A673 (cell line): ENCODE measurements at regions of chr9 and their contacts with region 1.

Region 1: GRCh38 chr9:137046098-137046787 is at the start of gene NPDC1:
- DNase-seq: peak; percentile 80
- H3K4me3 ChIP-seq: peak within 1 kb of the TSS; percentile 76
- H3K27ac ChIP-seq: peak within 1 kb of the TSS; percentile 27
- H3K4me1 ChIP-seq: peaks cover 24% of the 10 kb centered on the region
- H3K27me3 ChIP-seq: no peaks in the 10 kb centered on the region
- CTCF ChIP-seq: peak; percentile 88
- total RNA-seq, gene NPDC1: 73.9 and 81.4 TPM in 2 replicates

Region 2: DNA sequence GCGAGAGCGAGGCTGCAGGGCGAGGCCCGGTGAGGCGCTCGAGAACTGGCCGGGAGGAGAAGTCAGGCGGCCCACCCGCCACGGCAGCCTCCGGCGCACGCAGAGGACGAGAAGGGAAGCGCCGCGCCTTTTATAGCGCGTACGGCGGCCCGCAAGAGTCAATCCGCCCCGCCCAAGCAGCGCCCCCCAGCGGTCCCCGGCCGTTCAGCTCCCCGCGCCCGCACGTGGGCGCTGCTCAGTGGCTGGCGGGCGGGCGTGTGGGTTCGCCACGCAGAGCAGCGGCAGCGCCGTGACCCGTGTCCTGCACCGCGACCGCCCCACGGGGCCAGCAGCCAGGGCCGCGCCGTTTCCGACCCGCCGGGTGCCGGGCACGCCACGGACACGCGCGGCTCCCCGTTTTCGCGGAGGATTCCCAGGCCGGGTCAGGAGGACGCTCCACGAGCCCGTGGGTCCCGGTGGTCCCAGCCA is 318.1 kb before region 1 on chr9:
- CTCF ChIA-PET with region 1: interaction called, 10 read pairs
- POLR2A ChIA-PET with region 1: no interaction called
- intact Hi-C with region 1: no loop called
- DNase-seq: peak; percentile 92
- H3K4me3 ChIP-seq: peak overlapping the region; percentile 95
- H3K27ac ChIP-seq: peak overlapping the region; percentile 94
- H3K4me1 ChIP-seq: peaks cover 20% of the 10 kb centered on the region
- H3K27me3 ChIP-seq: no peaks in the 10 kb centered on the region
- CTCF ChIP-seq: peak; percentile 85

Region 3: GRCh38 chr9:136769710-136770191 is 276.5 kb before region 1 on chr9:
- CTCF ChIA-PET with region 1: interaction called, 11 read pairs
- POLR2A ChIA-PET with region 1: no interaction called
- intact Hi-C with region 1: no loop called
- DNase-seq: peak; percentile 73
- H3K4me3 ChIP-seq: peak overlapping the region; percentile 44
- H3K27ac ChIP-seq: no peak overlapping the region
- H3K4me1 ChIP-seq: no peaks in the 10 kb centered on the region
- H3K27me3 ChIP-seq: no peaks in the 10 kb centered on the region
- CTCF ChIP-seq: peak; percentile 65

Region 4: GRCh38 chr9:137034863-137035761 is 11.1 kb before region 1 on chr9:
- CTCF ChIA-PET with region 1: interaction called, 17 read pairs
- POLR2A ChIA-PET with region 1: no interaction called
- intact Hi-C with region 1: no loop called
- DNase-seq: peak; percentile 89
- H3K4me3 ChIP-seq: peak overlapping the region; percentile 22
- H3K27ac ChIP-seq: no peak overlapping the region
- H3K4me1 ChIP-seq: peaks cover 9% of the 10 kb centered on the region
- H3K27me3 ChIP-seq: no peaks in the 10 kb centered on the region
- CTCF ChIP-seq: peak; percentile 96

Region 5: DNA sequence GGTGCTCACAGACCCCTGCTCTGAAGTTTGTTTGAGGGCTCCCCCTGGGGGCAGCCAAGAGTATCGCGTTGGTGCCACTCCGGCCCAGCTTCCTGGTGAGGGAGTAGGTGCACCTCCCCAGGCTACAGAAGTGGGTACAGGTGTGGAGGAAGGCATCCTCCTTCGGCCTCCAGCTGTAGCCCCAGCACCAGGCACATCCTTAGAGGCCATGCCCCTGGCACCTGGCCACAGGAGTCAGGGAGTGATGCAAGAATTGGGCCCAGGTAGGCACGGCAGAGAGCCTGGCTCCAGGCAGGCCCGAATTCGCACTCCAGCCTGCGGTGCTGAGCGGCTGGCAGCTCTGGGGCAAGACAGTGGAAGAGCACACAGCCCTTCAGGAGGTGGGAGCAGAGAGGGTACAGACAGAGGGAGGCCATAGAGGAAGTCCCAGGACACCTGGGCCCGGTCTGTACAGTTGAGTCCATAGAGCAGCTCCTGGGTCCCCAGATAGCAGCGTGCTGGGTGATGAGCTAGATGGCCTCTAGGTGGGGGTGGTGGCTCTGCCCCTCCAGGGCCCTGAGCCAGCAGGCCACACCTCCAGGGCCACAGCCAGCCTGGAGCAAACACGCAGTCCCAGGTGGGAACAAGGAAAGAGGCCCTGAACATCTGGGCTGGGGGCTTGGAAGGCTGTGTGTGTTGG is 21.8 kb after region 1 on chr9:
- CTCF ChIA-PET with region 1: interaction called, 11 read pairs
- POLR2A ChIA-PET with region 1: no interaction called
- intact Hi-C with region 1: no loop called
- DNase-seq: peak; percentile 88
- H3K4me3 ChIP-seq: peak overlapping the region; percentile 61
- H3K27ac ChIP-seq: no peak overlapping the region
- H3K4me1 ChIP-seq: peaks cover 15% of the 10 kb centered on the region
- H3K27me3 ChIP-seq: no peaks in the 10 kb centered on the region
- CTCF ChIP-seq: peak; percentile 77

Region 6: GRCh38 chr9:137114610-137115391 is 68.6 kb after region 1 on chr9 and contains the start of gene DPP7:
- CTCF ChIA-PET with region 1: no interaction called
- POLR2A ChIA-PET with region 1: no interaction called
- intact Hi-C with region 1: loop called (anchors 5 kb)
- DNase-seq: peak; percentile 68
- H3K4me3 ChIP-seq: peak within 1 kb of the TSS; percentile 63
- H3K27ac ChIP-seq: peak within 1 kb of the TSS; percentile 67
- H3K4me1 ChIP-seq: peaks cover 7% of the 10 kb centered on the region
- H3K27me3 ChIP-seq: no peaks in the 10 kb centered on the region
- CTCF ChIP-seq: no peak
- total RNA-seq, gene DPP7: 120 and 122 TPM in 2 replicates

Region 7: DNA sequence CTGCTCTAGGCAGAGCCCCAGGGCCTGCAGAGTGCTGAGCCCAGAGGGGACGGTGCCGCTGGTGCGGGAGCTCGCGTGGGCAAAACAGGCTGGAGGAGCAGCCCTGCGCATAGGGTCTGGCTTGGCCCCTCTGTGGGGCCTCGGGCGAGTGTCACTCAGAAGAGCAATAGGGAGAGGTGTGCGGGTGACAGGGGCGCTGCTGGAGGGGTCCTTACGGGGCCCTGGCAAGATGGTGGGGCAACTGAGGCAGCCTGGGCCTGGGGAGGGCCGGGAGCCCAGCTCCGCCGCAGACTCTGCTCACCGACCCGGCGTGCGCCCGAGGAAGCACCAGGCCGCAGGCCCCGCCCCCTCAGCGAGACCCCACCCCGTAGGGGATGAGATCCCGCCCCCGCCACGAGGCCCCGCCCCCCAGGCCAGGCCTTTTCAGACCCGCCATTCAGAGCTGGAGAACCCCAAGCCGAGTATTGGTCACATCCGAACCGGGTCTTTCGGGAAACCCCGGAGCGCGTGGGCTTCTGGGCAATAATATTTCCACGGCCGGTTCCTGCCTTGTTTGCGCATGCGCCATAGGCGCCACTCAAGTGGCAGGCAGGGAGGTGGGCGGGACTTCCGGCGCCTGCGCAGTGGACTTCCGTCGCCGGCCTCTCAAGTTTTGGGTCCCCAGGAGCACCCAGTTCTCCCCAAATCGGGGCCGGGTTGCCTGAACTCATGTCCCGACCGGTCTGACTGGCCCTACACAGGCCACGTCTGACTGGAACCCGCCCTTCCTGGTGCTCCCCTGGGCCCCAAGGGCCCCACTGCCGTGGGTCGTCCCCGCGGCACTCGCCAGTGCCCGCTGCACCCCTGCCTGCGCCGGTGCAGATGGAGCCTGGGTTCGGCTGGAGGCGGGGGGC is 177.1 kb after region 1 on chr9:
- CTCF ChIA-PET with region 1: interaction called, 12 read pairs
- POLR2A ChIA-PET with region 1: no interaction called
- intact Hi-C with region 1: no loop called
- DNase-seq: peak; percentile 99
- H3K4me3 ChIP-seq: peak overlapping the region; percentile 72
- H3K27ac ChIP-seq: peak overlapping the region; percentile 87
- H3K4me1 ChIP-seq: peaks cover 9% of the 10 kb centered on the region
- H3K27me3 ChIP-seq: no peaks in the 10 kb centered on the region
- CTCF ChIP-seq: no peak